B cell (primary cell): ENCODE measurements at regions of chr5 and their contacts with region 1.

Region 1: GRCh38 chr5:177454397-177455035 is 7.9 kb downstream of the PRR7 start:
- DNase-seq: peak; percentile 98
- ATAC-seq: peak; percentile 53
- H3K4me3 ChIP-seq: peak overlapping the region; percentile 13 to 91 (median 74)
- H3K4me3 Mint-ChIP-seq: peak overlapping the region; percentile 96
- H3K27ac ChIP-seq: peak overlapping the region; percentile 88 to 97
- H3K27ac Mint-ChIP-seq: peak overlapping the region; percentile 97
- H3K4me1 ChIP-seq: peaks cover 17 to 32% of the 10 kb centered on the region in 2 donors
- H3K4me1 Mint-ChIP-seq: peaks cover 27% of the 10 kb centered on the region
- H3K27me3 ChIP-seq: peaks cover 0 to 7% (median 0%) of the 10 kb centered on the region in 4 experiments
- H3K27me3 Mint-ChIP-seq: no peaks in the 10 kb centered on the region
- CTCF ChIP-seq: peak; percentile 81

Region 2: DNA sequence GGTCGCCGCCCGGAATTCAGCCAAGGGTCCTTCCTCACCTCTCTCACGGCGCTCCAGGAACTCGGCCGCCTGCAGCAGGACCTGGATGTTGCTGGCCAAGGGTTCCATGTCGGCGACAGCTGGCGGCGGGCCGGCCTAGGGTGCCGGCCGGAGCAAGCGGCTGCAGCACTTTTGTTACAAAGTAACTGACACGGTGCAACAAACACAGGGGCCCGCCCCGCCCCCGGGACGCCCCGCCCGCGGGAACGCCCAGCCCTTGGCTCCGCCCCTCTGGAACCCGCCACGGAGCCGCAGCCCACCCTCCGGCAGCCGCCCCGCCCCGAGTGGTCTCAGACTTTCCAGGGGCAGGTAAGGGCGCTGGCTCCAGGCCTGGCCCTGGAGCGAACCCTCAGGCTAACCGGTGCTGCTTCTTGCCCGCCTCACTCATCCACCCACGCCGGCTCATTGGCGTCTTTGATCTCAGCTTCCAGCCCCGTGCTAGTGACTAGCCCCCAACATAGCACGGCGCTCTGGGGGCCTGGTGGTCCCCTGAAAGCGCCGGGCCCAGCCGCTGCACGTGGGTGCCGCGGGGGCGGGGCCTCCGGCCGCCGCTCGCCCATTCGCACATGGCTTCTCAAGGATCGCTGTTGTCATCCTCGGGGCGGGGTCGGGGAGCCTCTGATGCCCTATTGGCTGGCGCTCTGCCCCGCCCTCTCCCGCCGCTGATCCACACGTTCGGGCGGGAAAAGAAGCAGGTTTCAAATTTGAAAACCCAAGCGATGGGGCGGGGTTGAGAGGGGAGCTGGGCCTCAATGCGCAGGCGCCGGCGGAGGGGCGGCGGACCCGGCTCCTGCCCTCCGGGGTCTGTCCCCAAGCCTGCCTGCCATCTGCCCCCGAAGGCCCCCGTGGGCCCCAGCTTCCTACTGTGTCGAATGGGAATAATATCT is 142.5 kb before region 1 on chr5 and contains the start of gene MXD3:
- CTCF ChIA-PET with region 1: interaction called, 8 read pairs
- POLR2A ChIA-PET with region 1: no interaction called
- intact Hi-C with region 1: loop called (anchors 2 kb)
- DNase-seq: peak; percentile 94
- ATAC-seq: peak; percentile 89
- H3K4me3 ChIP-seq: peak within 1 kb of the TSS; percentile 15 to 80 (median 63)
- H3K4me3 Mint-ChIP-seq: peak within 1 kb of the TSS; percentile 90
- H3K27ac ChIP-seq: peak within 1 kb of the TSS; percentile 27 to 34
- H3K27ac Mint-ChIP-seq: peak within 1 kb of the TSS; percentile 84
- H3K4me1 ChIP-seq: peaks cover 40 to 58% of the 10 kb centered on the region in 2 donors
- H3K4me1 Mint-ChIP-seq: peaks cover 41% of the 10 kb centered on the region
- H3K27me3 ChIP-seq: no peaks in the 10 kb centered on the region
- H3K27me3 Mint-ChIP-seq: no peaks in the 10 kb centered on the region
- CTCF ChIP-seq: no peak
- total RNA-seq, gene MXD3: 10.8 and 11.5 TPM in 2 replicates

Region 3: DNA sequence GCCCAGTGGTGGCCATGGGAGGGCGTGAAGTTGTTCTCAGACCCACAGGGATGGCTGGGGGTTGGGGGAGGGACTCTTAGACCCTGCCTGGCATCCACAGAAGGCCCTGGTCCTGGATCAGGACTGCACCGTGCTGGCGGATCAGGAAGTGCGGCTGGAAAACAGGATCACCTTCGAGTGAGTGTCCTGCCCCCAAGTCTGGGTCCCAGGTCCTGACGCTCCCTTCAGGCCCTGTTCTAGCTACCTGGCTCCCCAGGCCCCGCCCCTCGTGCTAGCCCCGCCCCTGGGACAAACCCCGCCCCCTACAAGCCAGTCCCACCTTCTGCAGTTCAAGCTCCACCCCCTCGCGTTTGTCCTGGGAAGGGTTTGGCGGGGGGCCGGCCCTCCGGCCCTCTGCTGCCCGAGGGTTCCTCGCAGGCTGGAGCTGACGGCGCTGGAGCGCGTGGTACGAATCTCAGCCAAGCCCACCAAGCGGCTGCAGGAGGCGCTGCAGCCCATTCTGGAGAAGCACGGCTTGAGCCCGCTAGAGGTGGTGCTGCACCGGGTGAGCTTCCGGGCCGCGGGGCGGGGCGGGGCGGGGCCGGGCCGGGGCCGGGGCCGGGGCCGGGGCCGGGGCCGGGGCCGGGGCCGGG is 83.9 kb before region 1 on chr5:
- CTCF ChIA-PET with region 1: interaction called, 29 read pairs
- POLR2A ChIA-PET with region 1: interaction called, 3 read pairs
- intact Hi-C with region 1: no loop called
- DNase-seq: peak; percentile 63
- ATAC-seq: peak; percentile 75
- H3K4me3 ChIP-seq: peak overlapping the region in 1 of 5 experiments; percentile 42
- H3K4me3 Mint-ChIP-seq: peak overlapping the region; percentile 63
- H3K27ac ChIP-seq: no peak overlapping the region
- H3K27ac Mint-ChIP-seq: no peak overlapping the region
- H3K4me1 ChIP-seq: peaks cover 35 to 38% of the 10 kb centered on the region in 2 donors
- H3K4me1 Mint-ChIP-seq: peaks cover 42% of the 10 kb centered on the region
- H3K27me3 ChIP-seq: no peaks in the 10 kb centered on the region
- H3K27me3 Mint-ChIP-seq: no peaks in the 10 kb centered on the region
- CTCF ChIP-seq: peak; percentile 33

Region 4: GRCh38 chr5:177431317-177432142 is 23.0 kb before region 1 on chr5:
- CTCF ChIA-PET with region 1: interaction called, 152 read pairs
- POLR2A ChIA-PET with region 1: interaction called, 103 read pairs
- intact Hi-C with region 1: loop called (anchors 1 kb)
- DNase-seq: peak; percentile 95
- ATAC-seq: peak; percentile 61
- H3K4me3 ChIP-seq: peak overlapping the region in 4 of 5 experiments; percentile 29 to 35 (median 32)
- H3K4me3 Mint-ChIP-seq: peak overlapping the region; percentile 94
- H3K27ac ChIP-seq: peak overlapping the region; percentile 92 to 96
- H3K27ac Mint-ChIP-seq: peak overlapping the region; percentile 97
- H3K4me1 ChIP-seq: peaks cover 63 to 83% of the 10 kb centered on the region in 2 donors
- H3K4me1 Mint-ChIP-seq: peaks cover 65% of the 10 kb centered on the region
- H3K27me3 ChIP-seq: no peaks in the 10 kb centered on the region
- H3K27me3 Mint-ChIP-seq: no peaks in the 10 kb centered on the region
- CTCF ChIP-seq: no peak

Region 5: GRCh38 chr5:177497292-177498033 is 42.9 kb after region 1 on chr5 and contains the start of gene PDLIM7:
- CTCF ChIA-PET with region 1: interaction called, 32 read pairs
- POLR2A ChIA-PET with region 1: interaction called, 3 read pairs
- intact Hi-C with region 1: loop called (anchors 1 kb)
- DNase-seq: peak; percentile 97
- ATAC-seq: peak; percentile 84
- H3K4me3 ChIP-seq: peak within 1 kb of the TSS; percentile 9 to 68 (median 65)
- H3K4me3 Mint-ChIP-seq: peak within 1 kb of the TSS; percentile 93
- H3K27ac ChIP-seq: no peak within 1 kb of the TSS
- H3K27ac Mint-ChIP-seq: peak within 1 kb of the TSS; percentile 73
- H3K4me1 ChIP-seq: peaks cover 58 to 72% of the 10 kb centered on the region in 2 donors
- H3K4me1 Mint-ChIP-seq: peaks cover 75% of the 10 kb centered on the region
- H3K27me3 ChIP-seq: peaks cover 0 to 10% (median 4%) of the 10 kb centered on the region in 4 experiments
- H3K27me3 Mint-ChIP-seq: peaks cover 3% of the 10 kb centered on the region
- CTCF ChIP-seq: no peak
- total RNA-seq, gene PDLIM7: 24.2 and 25.8 TPM in 2 replicates